ENCODE measurements at regions of chr2 and their contacts with region 1.

Region 1: GRCh38 chr2:63544017-63544627 is 44.2 kb downstream of the WDPCP start:
- DNase-seq: peak; percentile 42
- H3K4me3 ChIP-seq: no peak overlapping the region
- H3K27ac ChIP-seq: no peak overlapping the region
- H3K4me1 ChIP-seq: no peaks in the 10 kb centered on the region
- H3K27me3 ChIP-seq: no peaks in the 10 kb centered on the region
- CTCF ChIP-seq: peak; percentile 21 to 29
- POLR2A ChIP-seq: no peak

Region 2: GRCh38 chr2:63078852-63079606 is 465.1 kb before region 1 on chr2:
- CTCF ChIA-PET with region 1: interaction called, 8 read pairs
- POLR2A ChIA-PET with region 1: no interaction called
- dilution Hi-C with region 1: no loop called
- intact Hi-C with region 1: loop called (anchors 5 kb)
- DNase-seq: peak; percentile 6
- H3K4me3 ChIP-seq: no peak overlapping the region
- H3K27ac ChIP-seq: no peak overlapping the region
- H3K4me1 ChIP-seq: no peaks in the 10 kb centered on the region
- H3K27me3 ChIP-seq: peaks cover 5 to 8% of the 10 kb centered on the region in 2 experiments
- CTCF ChIP-seq: peak; percentile 13 to 28
- POLR2A ChIP-seq: no peak

Region 3: GRCh38 chr2:63796366-63796765 is 252.2 kb after region 1 on chr2:
- CTCF ChIA-PET with region 1: no interaction called
- POLR2A ChIA-PET with region 1: no interaction called
- dilution Hi-C with region 1: no loop called
- intact Hi-C with region 1: no loop called
- DNase-seq: no peak
- H3K4me3 ChIP-seq: no peak overlapping the region
- H3K27ac ChIP-seq: no peak overlapping the region
- H3K4me1 ChIP-seq: peaks cover under 1% of the 10 kb centered on the region
- H3K27me3 ChIP-seq: no peaks in the 10 kb centered on the region
- CTCF ChIP-seq: no peak
- POLR2A ChIP-seq: no peak

Measured in endothelial cell of umbilical vein (primary cell).